ENCODE measurements at regions of chr2 and their contacts with region 1.

Region 1: DNA sequence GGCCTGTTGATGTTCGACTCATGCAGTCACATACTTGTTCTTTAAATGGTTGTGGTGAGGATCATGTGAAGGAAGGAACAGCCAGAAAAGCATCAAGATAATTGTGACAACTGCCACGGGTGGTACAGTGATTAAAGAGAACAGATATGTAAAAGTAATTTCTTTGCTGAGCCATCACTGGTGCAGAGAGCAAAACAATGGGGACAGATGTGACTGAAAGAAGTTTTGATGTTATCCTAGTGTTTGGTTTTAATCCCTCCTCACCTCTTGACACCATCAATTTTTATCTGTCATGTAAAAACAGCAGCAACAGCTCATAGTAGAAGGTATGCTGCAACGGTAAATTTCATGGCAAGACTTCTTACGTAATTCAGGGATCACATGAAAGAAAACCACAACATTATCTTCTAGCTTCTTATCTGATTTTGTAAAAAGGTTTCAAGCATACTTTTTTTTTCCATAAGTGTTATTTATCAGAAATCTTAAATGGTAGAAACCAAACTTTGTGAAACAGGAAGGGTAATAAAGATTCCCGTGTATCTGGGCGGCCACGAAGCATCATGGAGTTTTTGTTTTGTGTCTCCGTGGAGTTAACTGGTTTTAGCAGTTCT is 65.2 kb downstream of the PLCL1 start:
- DNase-seq: peak; percentile 73
- H3K4me3 Mint-ChIP-seq: peak overlapping the region; percentile 75
- H3K27ac Mint-ChIP-seq: peak overlapping the region; percentile 84
- H3K4me1 Mint-ChIP-seq: peaks cover 38% of the 10 kb centered on the region
- H3K27me3 Mint-ChIP-seq: no peaks in the 10 kb centered on the region

Region 2: DNA sequence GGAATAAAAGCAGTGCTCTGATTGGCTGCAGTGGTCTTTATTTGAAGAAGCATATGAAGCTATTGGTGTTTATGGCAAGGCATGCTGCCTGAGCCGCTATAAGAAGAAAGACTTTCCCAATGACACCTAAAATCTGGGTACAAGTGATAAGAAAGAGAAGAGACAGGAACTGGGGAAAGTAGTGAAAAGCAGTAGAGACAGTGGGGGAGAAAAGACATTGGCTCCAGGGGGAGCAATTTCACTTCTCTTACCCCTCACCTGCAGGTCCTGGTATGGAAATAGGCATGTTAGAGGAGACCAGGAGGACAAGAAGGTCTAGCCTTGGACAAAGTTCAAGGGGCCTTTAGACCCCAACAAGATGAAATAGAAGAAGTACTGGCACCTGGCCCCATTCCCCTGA is 18.2 kb before region 1 on chr2:
- intact Hi-C with region 1: loop called (anchors 2 kb)
- DNase-seq: no peak
- H3K4me3 Mint-ChIP-seq: no peak overlapping the region
- H3K27ac Mint-ChIP-seq: no peak overlapping the region
- H3K4me1 Mint-ChIP-seq: peaks cover 20% of the 10 kb centered on the region
- H3K27me3 Mint-ChIP-seq: no peaks in the 10 kb centered on the region

Measured in activated CD4-positive, alpha-beta T cell treated with anti-CD3 and anti-CD28 coated beads, Interleukin-2, amount 10 ng/mL, durations not matched to agents 24 days and 14 days (primary cell).